ENCODE measurements at regions of chr1 and their contacts with region 1.

Region 1: GRCh38 chr1:26500488-26501175 is 28.4 kb downstream of the HMGN2 start:
- DNase-seq: peak; percentile 85

Region 2: DNA sequence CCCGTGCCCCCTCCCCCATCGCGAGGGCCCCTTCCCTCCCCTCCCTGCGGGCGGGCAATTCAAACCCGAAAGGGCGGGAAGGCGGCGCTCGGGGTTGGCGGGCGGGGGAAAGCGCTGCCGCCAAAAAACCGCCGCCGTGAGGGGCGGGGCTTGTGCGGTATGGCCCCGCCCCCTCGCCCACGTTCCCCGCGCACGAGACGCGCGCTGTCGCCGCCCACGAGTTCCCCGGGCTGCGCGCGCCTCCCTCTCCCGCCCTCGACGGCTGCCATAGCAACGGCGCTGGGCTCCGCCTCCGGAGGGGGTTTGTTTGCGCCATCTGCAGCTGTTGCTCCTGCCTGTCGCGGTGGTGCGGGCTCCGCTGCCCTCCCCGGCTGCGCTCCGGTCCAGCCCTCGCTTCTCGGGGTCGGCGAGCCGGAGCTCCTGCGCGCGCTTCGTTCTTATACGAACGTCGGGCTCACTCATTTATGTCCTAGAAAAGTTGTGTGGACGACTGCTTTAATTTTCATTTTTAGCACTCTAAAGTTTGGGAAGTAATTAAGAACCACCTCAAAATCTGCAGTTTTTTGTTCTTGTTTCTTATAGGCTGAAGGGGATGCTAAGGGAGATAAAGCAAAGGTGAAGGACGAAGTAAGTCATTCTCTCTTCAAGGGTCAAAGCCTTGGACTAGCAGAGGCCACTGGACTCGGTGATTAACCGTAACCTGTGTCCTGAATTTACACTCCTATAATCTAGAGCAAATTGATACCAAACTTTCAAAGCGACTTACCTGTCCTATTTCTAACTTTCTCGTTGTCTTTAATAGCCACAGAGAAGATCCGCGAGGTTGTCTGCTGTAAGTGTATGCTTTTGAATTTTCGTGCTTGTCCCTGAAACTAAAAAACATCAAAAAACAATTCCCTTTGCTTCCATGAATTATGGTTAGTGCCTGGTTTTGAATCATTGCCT is 27.5 kb before region 1 on chr1:
- CTCF ChIA-PET with region 1: no interaction called
- POLR2A ChIA-PET with region 1: interaction called, 28 read pairs
- DNase-seq: peak; percentile 96

Region 3: GRCh38 chr1:26490158-26490557 is 10.5 kb before region 1 on chr1:
- CTCF ChIA-PET with region 1: interaction called, 6 read pairs
- POLR2A ChIA-PET with region 1: interaction called, 31 read pairs
- DNase-seq: no peak

Region 4: GRCh38 chr1:26529655-26530409 is 29.2 kb after region 1 on chr1 and contains the start of gene RPS6KA1:
- CTCF ChIA-PET with region 1: interaction called, 8 read pairs
- POLR2A ChIA-PET with region 1: interaction called, 55 read pairs
- DNase-seq: peak; percentile 92

Region 5: DNA sequence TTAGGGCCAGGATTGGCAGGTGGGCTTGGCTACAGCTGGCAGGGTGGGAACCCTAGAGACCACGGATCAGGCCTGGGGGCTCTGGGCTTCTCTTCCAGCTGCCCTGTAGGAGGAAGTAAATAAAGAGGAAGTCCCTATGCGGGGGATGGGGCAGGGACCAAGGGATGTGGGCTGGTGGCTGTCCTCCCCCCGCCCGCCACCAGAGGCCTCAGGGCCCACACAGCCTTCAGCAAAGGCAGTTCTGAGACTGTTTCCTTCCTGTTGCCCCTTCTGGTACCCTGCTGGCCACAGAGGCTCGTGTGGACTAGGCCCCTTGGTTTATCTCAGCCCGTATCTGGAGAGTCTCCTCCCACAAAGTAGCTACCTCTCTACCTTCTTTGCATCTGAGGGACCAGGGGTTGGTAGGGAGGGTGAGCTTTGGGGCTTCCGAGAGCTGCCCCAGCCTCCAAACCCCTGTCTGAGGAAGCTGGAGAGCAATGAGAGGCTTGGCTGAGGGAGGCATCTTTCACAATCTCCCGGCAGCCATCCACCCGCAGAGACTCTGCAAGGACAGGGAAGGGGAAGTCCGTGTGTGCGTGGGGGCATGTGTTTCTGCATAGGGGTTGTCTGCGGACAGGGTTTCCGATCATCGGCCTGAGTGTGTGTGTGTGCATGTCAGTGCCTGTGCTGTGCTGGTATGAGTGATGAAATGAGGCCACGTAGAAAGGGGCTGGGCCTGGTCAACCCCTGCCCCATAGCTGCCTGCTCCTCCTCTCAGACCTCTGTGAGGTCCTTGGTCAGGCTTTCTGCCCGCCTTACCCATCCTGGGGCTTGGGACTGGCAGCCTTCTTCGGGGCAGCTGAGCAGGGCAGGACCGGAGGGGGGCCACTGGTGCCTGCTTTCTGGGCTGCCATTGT is 41.4 kb after region 1 on chr1:
- CTCF ChIA-PET with region 1: interaction called, 5 read pairs
- POLR2A ChIA-PET with region 1: interaction called, 15 read pairs
- DNase-seq: peak; percentile 59